Sigmoid colon (tissue), 7 donors: ENCODE measurements at regions of chr9 and their contacts with region 1.

Region 1: DNA sequence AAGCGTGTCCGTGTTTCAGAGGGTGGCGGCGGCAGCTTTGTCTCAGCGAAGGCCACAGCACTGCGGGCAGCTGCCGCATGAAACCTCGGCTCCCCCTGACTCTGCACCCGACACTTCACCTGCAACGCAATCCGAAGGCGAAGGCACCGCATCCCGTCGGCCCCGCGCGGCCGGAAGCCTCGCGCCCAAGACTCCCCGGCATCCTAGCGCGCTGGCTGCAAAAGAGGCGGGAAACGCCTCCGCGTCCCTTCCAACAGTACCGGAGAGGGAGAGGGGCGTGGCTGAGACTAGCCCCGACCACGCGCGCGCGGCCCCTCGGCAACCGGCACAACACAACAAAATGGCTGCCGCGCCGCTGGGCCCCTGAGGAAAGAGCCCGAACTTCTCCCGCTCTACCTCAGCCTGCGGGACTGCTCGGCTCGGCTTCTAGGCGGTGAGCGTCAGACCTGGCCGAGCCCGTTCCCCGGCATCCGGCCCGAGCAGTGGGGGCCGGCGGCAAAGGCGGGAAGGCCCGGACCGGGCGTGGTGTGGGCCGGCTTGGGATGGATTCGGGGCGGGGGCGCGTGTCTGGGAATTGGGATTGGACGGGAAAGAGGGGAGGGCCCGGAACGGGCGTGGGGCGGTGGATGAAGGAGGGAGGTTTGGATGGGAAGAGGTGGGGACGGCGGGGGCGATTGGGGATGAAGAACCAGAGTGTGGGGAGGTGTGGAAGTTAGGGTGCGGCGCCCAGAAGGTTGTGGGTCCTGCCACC is at the start of gene CNTRL:
- DNase-seq: peak; percentile 95
- H3K4me3 ChIP-seq: peak within 1 kb of the TSS; percentile 63 to 88 (median 74)
- H3K27ac ChIP-seq: peak within 1 kb of the TSS; percentile 84 to 96 (median 91)
- H3K4me1 ChIP-seq: peaks cover 0 to 15% (median 10%) of the 10 kb centered on the region in 4 donors
- H3K27me3 ChIP-seq: no peaks in the 10 kb centered on the region
- CTCF ChIP-seq: no peak
- EP300 ChIP-seq: no peak
- POLR2A ChIP-seq: peak; percentile 17 to 39
- total RNA-seq, gene CNTRL: 10.3 to 13.9 (median 12.5) TPM

Region 2: DNA sequence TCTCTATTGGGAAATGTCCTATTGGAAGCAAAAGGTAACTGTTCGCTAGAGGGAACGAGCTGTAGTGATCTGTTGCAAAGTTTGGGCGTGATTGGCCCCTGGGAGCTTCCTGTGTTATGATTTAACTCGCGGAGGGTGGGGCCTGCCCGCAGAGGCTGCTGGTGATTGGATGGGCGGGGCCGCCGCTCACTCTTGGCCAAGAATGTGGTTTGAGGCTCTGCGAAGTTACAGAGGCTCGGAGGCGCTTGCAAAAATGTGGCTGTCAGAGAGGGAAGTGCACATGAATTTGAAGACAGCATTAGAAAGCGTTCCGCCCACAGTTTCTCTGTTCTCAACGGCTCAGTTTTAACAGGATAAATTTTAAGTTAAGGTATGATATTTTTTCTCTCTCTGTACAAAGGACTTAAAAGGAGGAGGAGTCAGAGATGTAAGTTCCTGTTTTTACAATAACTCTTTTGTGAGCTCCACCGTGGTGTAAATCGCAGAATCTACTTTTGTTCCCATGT is 46.8 kb after region 1 on chr9:
- intact Hi-C with region 1: loop called (anchors 5 kb)
- DNase-seq: peak; percentile 99
- H3K4me3 ChIP-seq: peak overlapping the region; percentile 15 to 52 (median 45)
- H3K27ac ChIP-seq: peak overlapping the region; percentile 70 to 75 (median 72)
- H3K4me1 ChIP-seq: peaks cover 0 to 22% (median 11%) of the 10 kb centered on the region in 4 donors
- H3K27me3 ChIP-seq: no peaks in the 10 kb centered on the region
- CTCF ChIP-seq: peak in 3 of 4 experiments; percentile 32 to 44 (median 39)
- EP300 ChIP-seq: no peak
- POLR2A ChIP-seq: peak in 1 of 2 donors; percentile 32